A673 (cell line): ENCODE measurements at regions of chr17 and their contacts with region 1.

Region 1: DNA sequence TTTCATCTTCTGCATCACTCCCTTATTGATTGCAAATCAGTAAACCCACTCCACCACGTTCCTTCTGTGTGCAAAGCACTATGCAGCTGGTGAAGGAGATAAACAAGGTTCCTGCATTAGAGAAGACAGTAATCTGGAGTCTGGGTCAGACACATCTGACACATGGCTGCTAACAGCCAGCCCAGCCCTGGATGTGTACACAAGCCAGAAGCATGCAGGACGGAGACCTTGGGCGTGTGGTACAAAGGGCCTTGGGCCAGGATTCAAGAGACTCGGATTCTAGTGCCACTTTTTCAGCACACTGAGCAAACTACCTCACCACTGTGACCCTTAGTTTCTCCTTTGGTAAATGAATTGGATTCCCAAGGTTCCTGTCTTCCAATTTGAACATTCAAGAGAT is 86.6 kb upstream of the DNAH9 start:
- DNase-seq: no peak
- H3K4me3 ChIP-seq: no peak overlapping the region
- H3K27ac ChIP-seq: peak overlapping the region; percentile 69
- H3K4me1 ChIP-seq: peaks cover 57% of the 10 kb centered on the region
- H3K27me3 ChIP-seq: no peaks in the 10 kb centered on the region
- CTCF ChIP-seq: no peak

Region 2: GRCh38 chr17:11240041-11240801 is 271.5 kb before region 1 on chr17:
- CTCF ChIA-PET with region 1: interaction called, 12 read pairs
- POLR2A ChIA-PET with region 1: no interaction called
- intact Hi-C with region 1: loop called (anchors 1 kb)
- DNase-seq: peak; percentile 77
- H3K4me3 ChIP-seq: peak overlapping the region; percentile 65
- H3K27ac ChIP-seq: peak overlapping the region; percentile 80
- H3K4me1 ChIP-seq: peaks cover 32% of the 10 kb centered on the region
- H3K27me3 ChIP-seq: no peaks in the 10 kb centered on the region
- CTCF ChIP-seq: peak; percentile 55

Region 3: DNA sequence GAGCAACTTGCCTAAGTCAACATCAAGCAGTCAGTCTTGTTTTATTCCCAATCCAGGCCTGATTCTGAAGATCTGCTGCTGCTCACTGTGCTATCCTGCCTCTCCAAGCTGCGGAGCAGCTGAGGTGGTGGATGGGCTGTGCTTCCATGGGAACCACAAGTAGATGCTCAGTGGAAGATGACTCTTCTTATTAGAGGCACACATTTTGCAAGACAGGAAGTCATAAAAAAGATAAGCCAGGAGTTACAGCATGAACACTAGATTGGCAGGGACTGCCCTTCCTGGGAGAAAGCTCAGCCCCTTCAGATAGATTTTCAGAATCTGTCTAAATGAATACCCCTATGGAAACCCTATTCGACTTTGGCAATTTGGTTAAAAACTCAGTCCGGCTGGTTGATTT is 127.6 kb before region 1 on chr17:
- CTCF ChIA-PET with region 1: no interaction called
- POLR2A ChIA-PET with region 1: no interaction called
- intact Hi-C with region 1: loop called (anchors 5 kb)
- DNase-seq: peak; percentile 96
- H3K4me3 ChIP-seq: no peak overlapping the region
- H3K27ac ChIP-seq: peak overlapping the region; percentile 77
- H3K4me1 ChIP-seq: peaks cover 56% of the 10 kb centered on the region
- H3K27me3 ChIP-seq: no peaks in the 10 kb centered on the region
- CTCF ChIP-seq: no peak

Region 4: DNA sequence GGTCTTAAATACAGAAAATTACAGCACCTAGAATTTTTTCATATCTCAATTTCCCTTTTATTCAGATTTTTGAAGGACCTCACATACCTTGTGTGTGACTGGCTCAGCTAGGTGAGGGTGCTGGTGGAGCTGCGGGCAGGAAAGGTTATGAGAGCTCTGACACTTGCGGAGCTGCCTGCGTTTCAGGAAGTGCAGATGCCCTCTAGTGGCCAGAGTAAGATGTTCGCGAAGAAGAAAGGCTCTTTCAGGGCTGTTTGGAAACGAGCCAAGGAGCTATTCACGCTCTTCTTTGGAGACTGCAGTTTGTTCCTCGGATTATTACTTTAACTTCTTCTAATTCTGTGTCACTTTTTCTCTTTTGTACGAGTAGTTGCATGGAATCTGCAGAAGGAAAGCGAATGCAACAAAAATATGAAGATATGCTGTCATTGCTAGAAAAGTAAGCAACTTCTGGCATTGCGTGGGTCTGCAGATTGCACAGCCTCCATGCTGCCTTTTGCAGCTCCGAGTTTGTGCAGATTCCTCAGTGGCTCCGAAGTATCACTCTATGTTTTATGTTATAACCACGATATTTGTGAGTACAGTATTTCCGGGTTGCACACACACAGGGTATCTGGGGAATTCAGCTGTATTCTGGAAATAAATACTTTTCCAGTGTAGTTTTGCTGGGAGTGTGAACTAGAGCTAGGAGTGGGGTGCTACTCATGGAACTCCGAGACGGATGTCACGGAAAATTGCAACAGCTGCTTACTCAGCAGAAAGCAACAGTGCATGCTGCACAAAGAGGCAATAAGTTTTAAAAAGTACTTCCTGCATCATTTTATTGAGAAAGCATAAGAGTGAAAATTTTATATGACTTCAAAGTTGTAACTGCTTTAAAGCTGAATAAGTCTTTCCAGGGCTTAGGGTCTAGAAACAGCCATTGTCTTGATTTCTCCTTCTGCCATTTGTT is 132.8 kb after region 1 on chr17:
- CTCF ChIA-PET with region 1: interaction called, 19 read pairs
- POLR2A ChIA-PET with region 1: no interaction called
- intact Hi-C with region 1: loop called (anchors 1 kb)
- DNase-seq: peak; percentile 94
- H3K4me3 ChIP-seq: no peak overlapping the region
- H3K27ac ChIP-seq: no peak overlapping the region
- H3K4me1 ChIP-seq: peaks cover 35% of the 10 kb centered on the region
- H3K27me3 ChIP-seq: no peaks in the 10 kb centered on the region
- CTCF ChIP-seq: peak; percentile 94

Region 5: DNA sequence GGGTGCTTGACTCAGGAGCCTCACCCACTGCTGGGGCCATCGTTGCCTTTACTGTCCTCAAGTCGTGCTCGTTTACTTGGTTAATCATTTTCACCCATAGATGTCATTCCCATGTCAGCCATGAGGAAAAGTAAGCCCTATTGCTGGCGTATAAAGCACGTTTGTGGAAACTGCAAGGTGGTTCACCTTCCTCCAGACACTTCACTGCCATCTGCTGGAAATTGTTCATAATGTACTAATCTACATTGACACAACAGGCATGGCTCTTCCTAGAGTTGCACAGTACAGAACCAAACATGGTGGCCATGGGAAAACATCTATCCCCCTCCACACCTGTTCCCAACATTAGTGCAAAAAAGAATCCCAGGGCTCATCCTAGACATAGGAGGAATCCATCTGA is 369.0 kb after region 1 on chr17:
- CTCF ChIA-PET with region 1: no interaction called
- POLR2A ChIA-PET with region 1: no interaction called
- intact Hi-C with region 1: loop called (anchors 5 kb)
- DNase-seq: peak; percentile 85
- H3K4me3 ChIP-seq: no peak overlapping the region
- H3K27ac ChIP-seq: no peak overlapping the region
- H3K4me1 ChIP-seq: no peaks in the 10 kb centered on the region
- H3K27me3 ChIP-seq: no peaks in the 10 kb centered on the region
- CTCF ChIP-seq: peak; percentile 66